ENCODE measurements at regions of chr1 and their contacts with region 1.

Region 1: GRCh38 chr1:28983509-28984310 is 69.3 kb downstream of the EPB41 start:
- DNase-seq: no peak
- ATAC-seq: no peak
- H3K4me3 ChIP-seq: no peak overlapping the region
- H3K27ac ChIP-seq: no peak overlapping the region
- H3K4me1 ChIP-seq: no peaks in the 10 kb centered on the region
- H3K27me3 ChIP-seq: no peaks in the 10 kb centered on the region
- CTCF ChIP-seq: no peak

Region 2: GRCh38 chr1:29062157-29062942 is 78.6 kb after region 1 on chr1:
- CTCF ChIA-PET with region 1: no interaction called
- POLR2A ChIA-PET with region 1: no interaction called
- in situ Hi-C with region 1: no loop called
- intact Hi-C with region 1: no loop called
- DNase-seq: no peak
- ATAC-seq: no peak
- H3K4me3 ChIP-seq: no peak overlapping the region
- H3K27ac ChIP-seq: no peak overlapping the region
- H3K4me1 ChIP-seq: no peaks in the 10 kb centered on the region
- H3K27me3 ChIP-seq: no peaks in the 10 kb centered on the region
- CTCF ChIP-seq: no peak

Region 3: DNA sequence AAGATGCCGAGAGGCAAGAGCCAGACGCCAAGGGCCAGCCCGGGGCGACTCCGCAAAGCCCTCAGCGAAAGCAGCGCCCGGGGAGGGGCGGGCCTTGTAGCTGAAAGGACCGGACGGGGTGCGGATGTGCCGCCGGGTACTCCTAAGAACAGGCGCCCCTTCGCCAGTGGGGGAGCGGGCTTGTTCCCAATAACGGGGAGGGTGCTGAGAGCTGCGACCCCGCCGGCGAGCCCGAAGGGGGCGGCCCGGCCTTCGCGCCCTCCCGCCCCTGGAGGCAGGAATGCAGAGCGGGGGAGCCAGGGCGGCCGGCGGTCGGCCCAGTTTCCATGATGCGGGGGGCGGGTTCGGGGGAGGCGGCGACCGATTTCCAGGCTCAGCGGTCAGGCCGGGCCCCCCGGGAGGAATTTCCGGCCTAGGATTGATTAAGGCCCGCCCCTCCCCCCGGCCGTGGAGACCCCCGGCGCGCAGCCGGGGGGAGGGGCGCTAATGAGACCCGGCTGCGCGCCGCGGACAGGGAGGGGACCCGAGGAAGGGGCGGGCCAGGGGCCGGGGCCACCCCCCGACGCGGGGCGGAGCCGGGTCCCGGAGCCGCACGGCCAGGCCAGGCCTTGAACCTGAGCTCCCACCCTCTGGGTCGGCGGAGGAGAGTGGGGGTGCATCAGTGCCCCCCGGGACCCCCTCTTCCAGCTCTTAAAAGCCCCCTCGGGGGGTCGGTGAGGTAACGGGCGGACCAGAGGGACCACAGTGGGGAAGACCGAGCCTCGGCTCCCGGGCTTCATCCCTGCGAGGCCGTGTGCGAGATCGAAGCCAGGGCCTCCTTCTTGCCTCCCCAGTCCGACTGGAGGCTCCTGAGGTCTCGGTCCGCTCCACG is 140.9 kb after region 1 on chr1:
- CTCF ChIA-PET with region 1: interaction called, 10 read pairs
- POLR2A ChIA-PET with region 1: no interaction called
- in situ Hi-C with region 1: no loop called
- intact Hi-C with region 1: no loop called
- DNase-seq: no peak
- ATAC-seq: peak; percentile 74
- H3K4me3 ChIP-seq: peak overlapping the region; percentile 62 to 74
- H3K27ac ChIP-seq: peak overlapping the region; percentile 72
- H3K4me1 ChIP-seq: no peaks in the 10 kb centered on the region; the same call in 1 of the 2 replicates
- H3K27me3 ChIP-seq: no peaks in the 10 kb centered on the region; the same call in 1 of the 2 replicates
- CTCF ChIP-seq: no peak